ENCODE measurements at regions of chr18 and their contacts with region 1.

Region 1: GRCh38 chr18:50089702-50090101 is 105.2 kb downstream of the MYO5B start:
- DNase-seq: no peak
- ATAC-seq: no peak

Region 2: DNA sequence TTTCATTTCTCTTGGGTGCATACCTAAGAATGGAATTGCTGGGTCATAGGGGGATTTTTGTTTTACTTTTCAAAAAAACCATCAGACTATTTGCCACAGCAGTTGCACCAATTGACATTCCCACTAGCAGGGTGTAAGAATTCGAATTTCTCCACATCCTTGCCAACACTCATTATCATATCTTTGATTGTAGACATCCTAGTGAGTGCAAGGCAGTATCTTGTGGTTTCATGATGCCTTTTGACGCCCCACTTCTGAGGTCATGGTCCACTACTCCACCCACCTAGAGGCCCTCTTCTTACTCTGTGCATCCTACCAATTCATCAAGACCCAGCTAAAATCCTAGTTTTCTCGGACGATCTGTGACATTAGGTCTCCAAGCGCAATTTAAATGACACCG is 56.7 kb before region 1 on chr18:
- intact Hi-C with region 1: loop called (anchors 2 kb)
- DNase-seq: no peak
- ATAC-seq: no peak

Region 3: GRCh38 chr18:51430538-51430937 is 1340.8 kb after region 1 on chr18:
- intact Hi-C with region 1: no loop called
- DNase-seq: no peak
- ATAC-seq: no peak